Activated naive CD4-positive, alpha-beta T cell treated with anti-CD3 and anti-CD28 coated beads for 36 hours (primary cell): ENCODE measurements at regions of chr11 and their contacts with region 1.

Region 1: GRCh38 chr11:45102810-45103621 is 43.4 kb upstream of the PRDM11 start:
- DNase-seq: peak; percentile 85
- H3K4me3 Mint-ChIP-seq: peak overlapping the region; percentile 41
- H3K27ac Mint-ChIP-seq: peak overlapping the region; percentile 18
- H3K4me1 Mint-ChIP-seq: peaks cover 12% of the 10 kb centered on the region
- H3K27me3 Mint-ChIP-seq: peaks cover 12% of the 10 kb centered on the region

Region 2: GRCh38 chr11:44936525-44936924 is 166.5 kb before region 1 on chr11:
- CTCF ChIA-PET with region 1: interaction called, 741 read pairs
- intact Hi-C with region 1: loop called (anchors 1 kb)
- DNase-seq: peak; percentile 92
- H3K4me3 Mint-ChIP-seq: no peak overlapping the region
- H3K27ac Mint-ChIP-seq: no peak overlapping the region
- H3K4me1 Mint-ChIP-seq: no peaks in the 10 kb centered on the region
- H3K27me3 Mint-ChIP-seq: no peaks in the 10 kb centered on the region

Region 3: DNA sequence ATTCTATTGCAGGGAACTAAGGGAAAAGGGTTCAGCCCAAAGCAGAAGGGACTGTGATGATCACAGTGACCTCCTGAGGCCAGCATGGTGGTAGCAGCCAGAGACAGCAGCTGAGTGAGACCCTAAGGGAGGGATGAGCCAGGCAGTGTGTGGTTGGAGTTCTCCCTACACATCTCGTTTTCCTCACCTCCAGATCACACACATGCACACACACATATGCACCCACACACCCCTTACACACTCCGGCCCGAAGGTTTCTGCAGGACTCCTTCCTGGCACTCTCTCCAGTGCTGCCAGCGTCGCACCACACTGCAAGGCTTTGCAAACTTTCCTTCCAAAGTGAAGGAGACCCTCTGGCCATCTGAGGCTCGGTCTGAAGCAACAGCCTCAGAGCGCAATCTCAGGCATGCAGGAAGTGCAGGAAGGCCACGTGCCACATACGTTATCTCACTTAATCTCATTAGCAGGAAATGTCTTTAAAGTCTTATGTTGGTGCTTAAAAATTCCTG is 125.5 kb before region 1 on chr11:
- CTCF ChIA-PET with region 1: interaction called, 29 read pairs
- intact Hi-C with region 1: no loop called
- DNase-seq: peak; percentile 26
- H3K4me3 Mint-ChIP-seq: no peak overlapping the region
- H3K27ac Mint-ChIP-seq: no peak overlapping the region
- H3K4me1 Mint-ChIP-seq: peaks cover 9% of the 10 kb centered on the region
- H3K27me3 Mint-ChIP-seq: no peaks in the 10 kb centered on the region

Region 4: DNA sequence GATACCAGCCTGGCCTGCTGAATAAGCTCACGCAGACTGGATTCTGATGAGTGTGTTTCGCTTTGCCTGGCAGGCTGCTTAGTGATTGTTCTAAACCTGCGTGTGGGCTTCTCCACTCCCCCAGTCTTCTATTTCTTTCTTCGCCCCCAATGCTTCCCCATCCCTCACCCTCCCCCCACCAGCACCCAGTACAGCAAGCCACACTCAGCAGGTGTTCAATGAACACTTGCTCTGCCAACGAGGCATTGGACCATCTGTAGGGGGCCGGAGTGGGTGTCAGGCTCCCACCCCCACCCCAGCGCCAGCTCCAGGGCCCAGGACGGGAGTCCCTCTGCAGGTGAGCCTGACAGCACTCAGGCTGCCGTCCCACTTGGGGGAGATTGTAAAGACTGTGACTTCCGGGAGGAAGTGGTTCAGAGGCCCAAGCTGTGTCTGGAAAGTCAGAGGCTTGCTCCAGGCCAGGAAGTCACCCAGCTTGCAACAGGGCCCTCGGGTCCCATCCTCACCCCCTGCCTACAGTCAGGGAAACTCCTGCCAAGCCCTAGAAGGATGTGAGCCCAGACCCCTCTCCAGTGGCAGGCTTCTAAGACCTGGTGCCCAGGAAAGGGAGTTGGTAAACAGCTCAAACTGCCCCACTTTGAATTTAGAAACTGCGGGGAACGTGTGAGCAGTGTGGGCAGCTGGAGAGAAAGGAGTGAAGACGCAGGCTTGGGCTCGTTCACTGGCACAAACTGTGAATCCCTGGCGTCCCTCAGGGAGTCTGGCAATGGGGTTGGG is 22.9 kb before region 1 on chr11:
- CTCF ChIA-PET with region 1: interaction called, 25 read pairs
- intact Hi-C with region 1: loop called (anchors 1 kb)
- DNase-seq: peak; percentile 82
- H3K4me3 Mint-ChIP-seq: peak overlapping the region; percentile 33
- H3K27ac Mint-ChIP-seq: peak overlapping the region; percentile 86
- H3K4me1 Mint-ChIP-seq: peaks cover 40% of the 10 kb centered on the region
- H3K27me3 Mint-ChIP-seq: no peaks in the 10 kb centered on the region

Region 5: GRCh38 chr11:45815449-45816146 is 712.6 kb after region 1 on chr11:
- CTCF ChIA-PET with region 1: no interaction called
- intact Hi-C with region 1: no loop called
- DNase-seq: no peak
- H3K4me3 Mint-ChIP-seq: no peak overlapping the region
- H3K27ac Mint-ChIP-seq: no peak overlapping the region
- H3K4me1 Mint-ChIP-seq: no peaks in the 10 kb centered on the region
- H3K27me3 Mint-ChIP-seq: no peaks in the 10 kb centered on the region